ENCODE measurements at regions of chr9 and their contacts with region 1.

Region 1: DNA sequence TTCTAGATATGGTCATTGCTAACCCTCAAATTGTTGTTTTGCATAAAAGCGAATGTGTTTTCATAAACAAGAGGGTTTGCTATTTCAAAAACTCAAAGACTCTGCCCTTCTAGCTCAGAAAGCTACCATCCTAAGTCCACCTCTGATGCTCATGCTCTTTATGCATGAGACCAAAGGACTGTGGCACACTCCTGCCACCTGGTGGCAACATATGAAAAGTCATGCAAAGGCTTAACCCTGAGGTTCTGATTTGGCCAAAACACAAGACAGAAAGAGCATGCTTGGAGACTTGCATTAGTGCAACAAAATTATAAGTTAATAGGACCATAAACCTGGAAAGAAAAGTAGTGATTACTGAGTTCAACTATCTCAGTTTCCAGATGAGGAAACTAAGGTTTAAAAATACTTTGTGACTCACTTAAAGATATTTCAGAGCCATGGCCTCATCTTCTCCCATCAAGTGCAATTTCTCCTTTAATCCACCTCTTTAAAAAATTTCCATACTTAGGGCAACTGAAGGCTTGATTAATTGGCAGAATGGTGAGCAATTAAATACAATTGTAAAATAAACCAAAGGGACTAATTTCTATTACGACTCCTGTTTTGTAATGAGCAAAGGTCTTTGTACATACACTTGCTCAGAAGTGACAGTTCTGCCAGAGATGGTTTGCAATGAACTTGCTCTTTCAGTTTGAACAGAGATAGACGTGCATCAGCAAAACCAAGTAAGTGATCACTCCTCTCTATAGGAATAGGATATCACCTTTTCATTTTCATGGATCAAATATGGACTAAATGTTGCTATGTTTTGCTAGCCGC is 110.7 kb upstream of the RAD23B start:
- DNase-seq: peak; percentile 72
- H3K4me3 Mint-ChIP-seq: no peak overlapping the region
- H3K27ac Mint-ChIP-seq: peak overlapping the region; percentile 69
- H3K4me1 Mint-ChIP-seq: peaks cover 17% of the 10 kb centered on the region
- H3K27me3 Mint-ChIP-seq: peaks cover 15% of the 10 kb centered on the region

Region 2: DNA sequence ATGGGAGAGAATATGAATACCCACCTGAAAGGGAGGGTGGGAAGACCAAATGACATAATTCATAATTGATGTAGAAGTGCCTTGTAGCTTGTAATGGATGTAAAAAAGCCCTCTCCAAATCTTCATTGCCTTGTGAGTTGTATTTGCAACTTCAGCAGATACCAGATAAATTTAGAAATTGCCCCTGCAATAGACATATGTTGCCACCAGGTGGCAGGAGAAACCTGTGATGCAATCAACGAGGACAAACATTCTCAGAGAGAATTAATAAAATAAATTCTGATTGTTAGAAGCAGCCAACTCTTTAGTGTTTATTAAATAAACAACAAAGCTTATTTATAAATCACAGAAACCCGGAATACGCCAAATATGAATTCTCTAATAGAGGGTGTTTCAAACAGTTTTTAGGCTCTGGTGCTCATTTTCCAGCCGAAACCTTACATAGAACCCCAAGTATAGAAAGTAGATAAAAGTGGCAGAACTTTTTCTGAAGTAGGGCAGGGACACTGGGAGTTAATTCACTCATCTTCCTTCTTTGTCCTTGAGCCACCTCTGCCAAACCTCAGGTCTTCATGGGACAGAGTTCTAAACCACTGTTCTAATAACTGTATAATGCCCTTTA is 1330.2 kb before region 1 on chr9:
- CTCF ChIA-PET with region 1: interaction called, 3 read pairs
- POLR2A ChIA-PET with region 1: no interaction called
- intact Hi-C with region 1: loop called (anchors 1 kb)
- DNase-seq: peak; percentile 28
- H3K4me3 Mint-ChIP-seq: no peak overlapping the region
- H3K27ac Mint-ChIP-seq: no peak overlapping the region
- H3K4me1 Mint-ChIP-seq: no peaks in the 10 kb centered on the region
- H3K27me3 Mint-ChIP-seq: no peaks in the 10 kb centered on the region

Region 3: GRCh38 chr9:107008011-107008410 is 164.4 kb before region 1 on chr9:
- CTCF ChIA-PET with region 1: no interaction called
- POLR2A ChIA-PET with region 1: no interaction called
- intact Hi-C with region 1: no loop called
- DNase-seq: no peak
- H3K4me3 Mint-ChIP-seq: no peak overlapping the region
- H3K27ac Mint-ChIP-seq: no peak overlapping the region
- H3K4me1 Mint-ChIP-seq: no peaks in the 10 kb centered on the region
- H3K27me3 Mint-ChIP-seq: no peaks in the 10 kb centered on the region

Region 4: GRCh38 chr9:107137495-107138202 is 34.7 kb before region 1 on chr9:
- CTCF ChIA-PET with region 1: interaction called, 16 read pairs
- POLR2A ChIA-PET with region 1: interaction called, 3 read pairs
- intact Hi-C with region 1: loop called (anchors 1 kb)
- DNase-seq: no peak
- H3K4me3 Mint-ChIP-seq: no peak overlapping the region
- H3K27ac Mint-ChIP-seq: no peak overlapping the region
- H3K4me1 Mint-ChIP-seq: no peaks in the 10 kb centered on the region
- H3K27me3 Mint-ChIP-seq: peaks cover 11% of the 10 kb centered on the region

Region 5: GRCh38 chr9:107148216-107148615 is 24.2 kb before region 1 on chr9:
- CTCF ChIA-PET with region 1: no interaction called
- POLR2A ChIA-PET with region 1: no interaction called
- intact Hi-C with region 1: no loop called
- DNase-seq: no peak
- H3K4me3 Mint-ChIP-seq: no peak overlapping the region
- H3K27ac Mint-ChIP-seq: no peak overlapping the region
- H3K4me1 Mint-ChIP-seq: no peaks in the 10 kb centered on the region
- H3K27me3 Mint-ChIP-seq: no peaks in the 10 kb centered on the region

Region 6: GRCh38 chr9:107213561-107214028 is 41.2 kb after region 1 on chr9:
- CTCF ChIA-PET with region 1: no interaction called
- POLR2A ChIA-PET with region 1: no interaction called
- intact Hi-C with region 1: loop called (anchors 1 kb)
- DNase-seq: peak; percentile 31
- H3K4me3 Mint-ChIP-seq: no peak overlapping the region
- H3K27ac Mint-ChIP-seq: no peak overlapping the region
- H3K4me1 Mint-ChIP-seq: peaks cover 12% of the 10 kb centered on the region
- H3K27me3 Mint-ChIP-seq: peaks cover 5% of the 10 kb centered on the region

Region 7: GRCh38 chr9:107243751-107244150 is 71.4 kb after region 1 on chr9:
- CTCF ChIA-PET with region 1: interaction called, 4 read pairs
- POLR2A ChIA-PET with region 1: no interaction called
- intact Hi-C with region 1: loop called (anchors 1 kb)
- DNase-seq: peak; percentile 69
- H3K4me3 Mint-ChIP-seq: peak overlapping the region; percentile 38
- H3K27ac Mint-ChIP-seq: peak overlapping the region; percentile 79
- H3K4me1 Mint-ChIP-seq: peaks cover 26% of the 10 kb centered on the region
- H3K27me3 Mint-ChIP-seq: peaks cover 1% of the 10 kb centered on the region

Measured in activated CD4-positive, alpha-beta memory T cell treated with anti-CD3 and anti-CD28 coated beads for 36 hours (primary cell).